ENCODE measurements at regions of chr9 and their contacts with region 1.

Region 1: GRCh38 chr9:125700791-125701190 is 6.2 kb downstream of the MAPKAP1 start:
- DNase-seq: peak; percentile 71
- H3K4me3 Mint-ChIP-seq: peak overlapping the region; percentile 3
- H3K27ac Mint-ChIP-seq: peak overlapping the region; percentile 44
- H3K4me1 Mint-ChIP-seq: peaks cover 55% of the 10 kb centered on the region
- H3K27me3 Mint-ChIP-seq: no peaks in the 10 kb centered on the region

Region 2: GRCh38 chr9:124940693-124941453 is 759.9 kb before region 1 on chr9 and contains the start of gene GOLGA1:
- CTCF ChIA-PET with region 1: no interaction called
- POLR2A ChIA-PET with region 1: no interaction called
- intact Hi-C with region 1: no loop called
- DNase-seq: peak; percentile 95
- H3K4me3 Mint-ChIP-seq: peak within 1 kb of the TSS; percentile 79
- H3K27ac Mint-ChIP-seq: peak within 1 kb of the TSS; percentile 89
- H3K4me1 Mint-ChIP-seq: peaks cover 24% of the 10 kb centered on the region
- H3K27me3 Mint-ChIP-seq: no peaks in the 10 kb centered on the region
- total RNA-seq, gene GOLGA1: 14.1 to 15.3 TPM

Region 3: GRCh38 chr9:125521462-125522327 is 179.1 kb before region 1 on chr9:
- CTCF ChIA-PET with region 1: no interaction called
- POLR2A ChIA-PET with region 1: no interaction called
- intact Hi-C with region 1: loop called (anchors 2 kb)
- DNase-seq: peak; percentile 56
- H3K4me3 Mint-ChIP-seq: peak overlapping the region; percentile 52
- H3K27ac Mint-ChIP-seq: peak overlapping the region; percentile 81
- H3K4me1 Mint-ChIP-seq: peaks cover 52% of the 10 kb centered on the region
- H3K27me3 Mint-ChIP-seq: no peaks in the 10 kb centered on the region

Region 4: GRCh38 chr9:125608489-125609224 is 92.1 kb before region 1 on chr9:
- CTCF ChIA-PET with region 1: no interaction called
- POLR2A ChIA-PET with region 1: no interaction called
- intact Hi-C with region 1: no loop called
- DNase-seq: no peak
- H3K4me3 Mint-ChIP-seq: no peak overlapping the region
- H3K27ac Mint-ChIP-seq: no peak overlapping the region
- H3K4me1 Mint-ChIP-seq: peaks cover 35% of the 10 kb centered on the region
- H3K27me3 Mint-ChIP-seq: no peaks in the 10 kb centered on the region

Region 5: GRCh38 chr9:125663127-125663526 is 37.7 kb before region 1 on chr9:
- CTCF ChIA-PET with region 1: no interaction called
- POLR2A ChIA-PET with region 1: no interaction called
- intact Hi-C with region 1: loop called (anchors 5 kb)
- DNase-seq: no peak
- H3K4me3 Mint-ChIP-seq: no peak overlapping the region
- H3K27ac Mint-ChIP-seq: no peak overlapping the region
- H3K4me1 Mint-ChIP-seq: peaks cover 12% of the 10 kb centered on the region
- H3K27me3 Mint-ChIP-seq: no peaks in the 10 kb centered on the region

Region 6: GRCh38 chr9:125683486-125683885 is 17.3 kb before region 1 on chr9:
- CTCF ChIA-PET with region 1: no interaction called
- POLR2A ChIA-PET with region 1: no interaction called
- intact Hi-C with region 1: no loop called
- DNase-seq: no peak
- H3K4me3 Mint-ChIP-seq: no peak overlapping the region
- H3K27ac Mint-ChIP-seq: no peak overlapping the region
- H3K4me1 Mint-ChIP-seq: peaks cover 12% of the 10 kb centered on the region
- H3K27me3 Mint-ChIP-seq: no peaks in the 10 kb centered on the region

Region 7: GRCh38 chr9:125774106-125774505 is 73.3 kb after region 1 on chr9:
- CTCF ChIA-PET with region 1: no interaction called
- POLR2A ChIA-PET with region 1: no interaction called
- intact Hi-C with region 1: no loop called
- DNase-seq: no peak
- H3K4me3 Mint-ChIP-seq: no peak overlapping the region
- H3K27ac Mint-ChIP-seq: no peak overlapping the region
- H3K4me1 Mint-ChIP-seq: no peaks in the 10 kb centered on the region
- H3K27me3 Mint-ChIP-seq: no peaks in the 10 kb centered on the region

Region 8: GRCh38 chr9:125829743-125830142 is 129.0 kb after region 1 on chr9:
- CTCF ChIA-PET with region 1: no interaction called
- POLR2A ChIA-PET with region 1: no interaction called
- intact Hi-C with region 1: loop called (anchors 5 kb)
- DNase-seq: peak; percentile 60
- H3K4me3 Mint-ChIP-seq: peak overlapping the region; percentile 72
- H3K27ac Mint-ChIP-seq: peak overlapping the region; percentile 71
- H3K4me1 Mint-ChIP-seq: peaks cover 21% of the 10 kb centered on the region
- H3K27me3 Mint-ChIP-seq: no peaks in the 10 kb centered on the region